ENCODE measurements at regions of chr3 and their contacts with region 1.

Region 1: DNA sequence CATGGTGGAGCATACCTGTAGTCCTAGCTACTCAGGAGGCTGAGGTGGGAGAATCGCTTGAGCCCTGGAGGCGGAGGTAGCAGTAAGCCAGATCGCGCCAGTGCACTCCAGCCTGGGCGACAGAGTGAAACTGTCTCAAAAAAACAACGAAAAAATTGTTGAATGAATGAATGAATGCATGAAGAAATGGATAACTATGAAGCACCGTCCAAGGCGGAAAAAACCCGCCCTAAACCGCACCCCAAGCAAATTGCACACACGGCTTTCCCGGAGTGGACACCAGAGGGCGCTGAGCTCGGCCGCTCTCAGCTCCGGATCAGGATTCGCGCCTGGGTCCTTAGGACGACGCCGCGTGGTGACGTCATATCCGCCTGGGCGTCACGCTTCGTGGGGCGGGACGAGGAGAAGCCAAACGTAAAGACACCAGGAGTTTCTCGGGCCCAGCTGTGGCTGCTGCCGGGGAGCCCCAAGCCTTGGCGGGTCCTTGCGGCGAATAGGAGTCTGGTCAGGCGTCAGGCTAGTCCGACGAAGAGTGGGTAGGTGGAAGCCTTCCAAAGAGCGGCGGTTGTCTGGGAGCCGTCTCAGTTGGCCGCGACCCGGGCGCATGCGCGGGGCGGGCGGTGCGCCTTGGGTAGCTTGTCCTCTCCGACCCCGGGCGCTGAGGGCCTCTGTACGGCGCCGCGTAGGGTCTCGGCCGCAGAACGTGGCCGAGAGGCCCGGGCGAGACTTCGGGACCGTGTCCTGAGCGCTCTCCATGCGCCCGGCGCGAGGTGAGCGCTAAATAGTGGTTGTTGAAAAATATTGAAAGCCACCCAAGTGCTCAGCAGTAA is at the starts of genes HTD2 and RPP14:
- DNase-seq: peak; percentile 99
- H3K4me3 Mint-ChIP-seq: peak within 1 kb of the TSS; percentile 99
- H3K27ac Mint-ChIP-seq: peak within 1 kb of the TSS; percentile 96
- H3K4me1 Mint-ChIP-seq: peaks cover 26% of the 10 kb centered on the region
- H3K27me3 Mint-ChIP-seq: peaks cover 5% of the 10 kb centered on the region
- total RNA-seq, gene HTD2: 6.9 to 8.1 TPM
- total RNA-seq, gene RPP14: 12.1 to 14.4 TPM

Region 2: GRCh38 chr3:57587905-57588304 is 718.2 kb before region 1 on chr3:
- CTCF ChIA-PET with region 1: no interaction called
- intact Hi-C with region 1: no loop called
- DNase-seq: no peak
- H3K4me3 Mint-ChIP-seq: no peak overlapping the region
- H3K27ac Mint-ChIP-seq: no peak overlapping the region
- H3K4me1 Mint-ChIP-seq: peaks cover 40% of the 10 kb centered on the region
- H3K27me3 Mint-ChIP-seq: no peaks in the 10 kb centered on the region

Region 3: DNA sequence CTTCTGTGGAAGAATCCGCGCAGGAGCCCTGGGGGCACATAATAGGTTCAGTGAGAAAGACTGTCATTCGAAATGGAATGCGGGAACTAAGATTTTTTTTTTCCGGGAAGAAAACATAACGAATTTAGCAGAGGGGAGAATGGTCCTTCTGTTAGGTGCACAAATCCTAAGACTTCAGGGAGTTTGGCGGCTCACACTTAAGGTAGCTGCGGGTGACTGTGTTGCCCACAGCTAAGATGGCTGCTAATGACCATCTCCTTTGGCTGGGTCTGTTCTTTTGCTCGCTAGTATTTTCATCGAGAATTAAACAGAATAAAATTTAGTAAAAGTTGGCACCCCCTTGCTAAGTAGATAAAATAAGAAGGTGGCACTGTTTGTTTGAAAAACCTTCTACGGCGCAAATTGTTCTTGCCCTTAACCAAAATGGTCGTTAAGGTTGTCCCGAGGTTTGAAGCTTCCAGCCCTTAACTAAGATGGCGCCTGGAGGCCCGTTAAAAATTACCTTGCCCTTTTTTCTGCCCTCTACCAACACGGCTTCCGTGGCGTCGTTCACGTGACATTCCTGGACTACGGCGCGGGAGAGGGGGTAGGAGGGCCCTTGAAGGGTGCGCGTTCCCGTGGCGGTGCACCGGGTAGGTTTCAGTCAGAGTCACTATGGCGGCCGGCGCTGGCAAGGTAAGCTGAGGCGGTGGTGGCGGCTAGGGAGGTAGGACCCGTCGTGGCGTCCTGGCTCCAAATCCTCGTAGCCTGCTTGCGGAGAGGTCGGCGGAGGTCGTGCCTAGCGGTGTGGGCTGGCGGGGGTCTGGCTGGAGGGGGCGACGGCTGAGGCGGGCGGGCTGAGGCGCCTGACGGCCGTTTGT is 550.2 kb before region 1 on chr3 and contains the start of gene SLMAP:
- CTCF ChIA-PET with region 1: no interaction called
- intact Hi-C with region 1: loop called (anchors 1 kb)
- DNase-seq: peak; percentile 99
- H3K4me3 Mint-ChIP-seq: peak within 1 kb of the TSS; percentile 98
- H3K27ac Mint-ChIP-seq: peak within 1 kb of the TSS; percentile 92
- H3K4me1 Mint-ChIP-seq: peaks cover 36% of the 10 kb centered on the region
- H3K27me3 Mint-ChIP-seq: no peaks in the 10 kb centered on the region
- total RNA-seq, gene SLMAP: 35.1 TPM

Region 4: GRCh38 chr3:58116161-58116955 is 189.7 kb before region 1 on chr3:
- CTCF ChIA-PET with region 1: no interaction called
- intact Hi-C with region 1: no loop called
- DNase-seq: peak; percentile 51
- H3K4me3 Mint-ChIP-seq: no peak overlapping the region
- H3K27ac Mint-ChIP-seq: peak overlapping the region; percentile 27
- H3K4me1 Mint-ChIP-seq: peaks cover 26% of the 10 kb centered on the region
- H3K27me3 Mint-ChIP-seq: no peaks in the 10 kb centered on the region

Region 5: DNA sequence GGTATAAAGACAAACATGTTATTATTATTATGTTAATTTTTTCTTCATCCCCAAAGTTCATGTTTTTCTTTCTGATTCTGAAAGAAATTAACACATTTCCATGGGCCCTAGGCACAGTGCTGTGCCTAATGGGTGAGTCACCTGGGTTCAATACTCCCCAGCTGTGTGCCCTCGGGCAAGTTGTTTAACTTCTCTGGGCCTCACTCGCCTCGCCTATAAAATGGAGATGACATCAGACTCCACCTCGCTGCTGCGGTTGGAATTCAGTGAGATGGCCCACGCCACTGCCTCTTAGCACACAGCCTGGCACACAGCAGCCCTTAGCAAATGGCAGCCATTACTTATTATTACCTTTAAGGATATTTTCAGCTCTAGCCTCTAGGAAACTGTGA is 117.9 kb before region 1 on chr3:
- CTCF ChIA-PET with region 1: interaction called, 31 read pairs
- intact Hi-C with region 1: loop called (anchors 2 kb)
- DNase-seq: no peak
- H3K4me3 Mint-ChIP-seq: no peak overlapping the region
- H3K27ac Mint-ChIP-seq: no peak overlapping the region
- H3K4me1 Mint-ChIP-seq: no peaks in the 10 kb centered on the region
- H3K27me3 Mint-ChIP-seq: no peaks in the 10 kb centered on the region

Region 6: DNA sequence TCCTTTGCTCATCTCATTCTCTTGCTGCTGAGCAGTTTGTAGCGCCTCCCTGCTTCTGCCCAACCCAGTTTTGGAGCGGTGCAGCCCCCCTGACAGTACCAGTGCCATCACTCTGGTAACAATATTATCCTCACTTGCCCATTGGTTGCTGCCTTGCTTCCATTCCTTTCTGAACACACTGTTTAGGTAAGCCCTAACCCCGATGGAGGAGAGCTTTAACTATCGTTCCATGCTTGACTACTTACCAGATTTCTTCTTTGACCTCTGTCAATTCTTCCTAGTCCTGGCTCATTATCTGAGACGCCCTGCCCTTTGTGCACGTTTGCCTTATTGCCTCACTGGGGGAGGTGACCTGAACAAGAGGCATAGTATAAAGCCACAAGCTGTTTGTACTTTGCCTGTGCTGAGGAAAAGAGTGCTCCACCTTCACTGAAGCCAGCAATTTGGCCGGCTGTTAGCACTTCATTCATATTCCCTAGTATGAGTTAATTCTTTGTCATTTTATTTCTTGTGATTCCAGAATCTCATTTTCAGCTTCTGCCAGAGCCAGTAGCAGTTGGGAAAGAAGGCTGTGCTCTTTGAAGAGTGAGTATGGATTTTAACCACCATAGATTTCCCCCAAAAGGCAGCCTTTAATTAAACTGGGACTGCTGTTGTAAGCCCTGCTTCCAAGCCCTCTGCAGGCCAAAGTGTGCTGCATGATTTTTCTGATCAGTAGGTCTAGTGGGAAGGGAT is 56.6 kb before region 1 on chr3:
- CTCF ChIA-PET with region 1: no interaction called
- intact Hi-C with region 1: no loop called
- DNase-seq: no peak
- H3K4me3 Mint-ChIP-seq: no peak overlapping the region
- H3K27ac Mint-ChIP-seq: no peak overlapping the region
- H3K4me1 Mint-ChIP-seq: no peaks in the 10 kb centered on the region
- H3K27me3 Mint-ChIP-seq: no peaks in the 10 kb centered on the region

Region 7: GRCh38 chr3:58317811-58318210 is 11.7 kb after region 1 on chr3:
- CTCF ChIA-PET with region 1: interaction called, 36 read pairs
- intact Hi-C with region 1: loop called (anchors 1 kb)
- DNase-seq: no peak
- H3K4me3 Mint-ChIP-seq: no peak overlapping the region
- H3K27ac Mint-ChIP-seq: no peak overlapping the region
- H3K4me1 Mint-ChIP-seq: peaks cover 13% of the 10 kb centered on the region
- H3K27me3 Mint-ChIP-seq: no peaks in the 10 kb centered on the region

Region 8: GRCh38 chr3:58414538-58415197 is 108.6 kb after region 1 on chr3:
- CTCF ChIA-PET with region 1: interaction called, 40 read pairs
- intact Hi-C with region 1: loop called (anchors 1 kb)
- DNase-seq: peak; percentile 68
- H3K4me3 Mint-ChIP-seq: no peak overlapping the region
- H3K27ac Mint-ChIP-seq: no peak overlapping the region
- H3K4me1 Mint-ChIP-seq: peaks cover 6% of the 10 kb centered on the region
- H3K27me3 Mint-ChIP-seq: no peaks in the 10 kb centered on the region

Region 9: GRCh38 chr3:58471025-58471887 is 165.2 kb after region 1 on chr3:
- CTCF ChIA-PET with region 1: no interaction called
- intact Hi-C with region 1: loop called (anchors 1 kb)
- DNase-seq: peak; percentile 81
- H3K4me3 Mint-ChIP-seq: no peak overlapping the region
- H3K27ac Mint-ChIP-seq: peak overlapping the region; percentile 86
- H3K4me1 Mint-ChIP-seq: peaks cover 20% of the 10 kb centered on the region
- H3K27me3 Mint-ChIP-seq: no peaks in the 10 kb centered on the region

Region 10: DNA sequence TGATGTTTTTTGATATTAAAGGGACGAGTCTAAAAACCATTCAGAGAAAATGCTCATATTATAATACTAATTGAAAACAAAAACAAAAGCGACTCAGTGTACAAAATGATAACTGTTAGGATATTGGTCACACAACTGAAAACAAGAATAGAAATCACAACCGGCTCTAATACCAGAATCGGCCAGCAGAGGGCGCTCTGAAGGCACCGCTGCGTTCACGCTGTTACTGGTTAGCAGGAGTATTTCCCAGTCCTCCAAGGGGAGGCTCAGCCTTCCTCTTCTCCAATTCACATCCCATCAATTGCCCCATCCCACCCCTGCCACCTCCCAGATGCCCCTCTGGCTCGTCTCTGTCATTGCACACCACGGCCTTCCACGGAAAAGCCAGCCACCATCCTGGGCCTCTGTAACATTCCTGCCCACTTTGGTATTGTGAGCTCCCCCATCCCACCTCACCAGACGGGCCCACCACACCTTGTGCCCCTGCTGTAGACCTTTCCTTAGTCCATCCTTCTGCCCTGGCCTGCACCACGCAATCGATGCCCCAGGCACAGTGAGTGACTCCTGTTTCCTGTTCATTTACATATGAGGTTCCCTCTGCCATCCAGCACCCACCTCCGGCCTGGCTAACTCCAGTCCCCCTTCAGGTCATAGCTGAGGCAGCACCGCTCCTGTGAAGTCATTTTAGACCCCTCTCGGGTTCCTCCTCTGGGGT is 262.6 kb after region 1 on chr3:
- CTCF ChIA-PET with region 1: no interaction called
- intact Hi-C with region 1: no loop called
- DNase-seq: peak; percentile 89
- H3K4me3 Mint-ChIP-seq: no peak overlapping the region
- H3K27ac Mint-ChIP-seq: no peak overlapping the region
- H3K4me1 Mint-ChIP-seq: peaks cover 4% of the 10 kb centered on the region
- H3K27me3 Mint-ChIP-seq: no peaks in the 10 kb centered on the region

Region 11: DNA sequence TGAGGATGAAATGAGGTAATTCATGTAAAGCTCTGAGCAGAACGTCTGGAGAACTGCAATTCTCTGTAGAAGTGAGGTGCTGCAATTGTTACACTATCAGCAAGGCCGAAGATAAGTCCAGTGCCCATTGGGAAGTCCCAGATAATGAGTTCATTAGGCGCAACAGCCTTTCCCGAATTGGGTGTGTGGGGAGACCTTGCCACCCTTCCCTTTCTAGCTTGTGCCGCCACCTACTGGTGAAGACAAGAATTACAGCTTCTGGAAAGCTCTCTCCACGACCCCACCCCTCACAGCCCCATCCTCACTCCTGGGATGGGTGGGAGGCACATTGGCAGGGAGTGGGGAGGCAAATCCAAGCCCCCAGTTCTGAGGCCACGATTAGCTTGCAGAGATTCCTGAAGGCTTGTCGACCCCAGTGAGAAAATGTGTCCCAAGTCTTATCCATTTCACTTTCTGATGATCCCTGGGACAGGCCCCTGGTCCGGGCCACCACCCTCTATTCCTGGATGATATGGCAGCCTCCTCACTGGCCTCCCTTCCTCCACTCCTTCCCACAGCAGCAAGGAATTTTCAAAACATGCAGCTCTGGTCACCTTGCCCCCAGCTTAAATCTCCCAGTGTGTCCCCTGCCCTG is 324.1 kb after region 1 on chr3:
- CTCF ChIA-PET with region 1: interaction called, 13 read pairs
- intact Hi-C with region 1: loop called (anchors 1 kb)
- DNase-seq: peak; percentile 81
- H3K4me3 Mint-ChIP-seq: no peak overlapping the region
- H3K27ac Mint-ChIP-seq: no peak overlapping the region
- H3K4me1 Mint-ChIP-seq: no peaks in the 10 kb centered on the region
- H3K27me3 Mint-ChIP-seq: no peaks in the 10 kb centered on the region

Measured in activated naive CD4-positive, alpha-beta T cell treated with anti-CD3 and anti-CD28 coated beads for 36 hours (primary cell).